Cardiac septum (tissue), 1 donor: ENCODE measurements at regions of chr1 and their contacts with region 1.

Region 1: GRCh38 chr1:41101950-41102607 is 80.6 kb upstream of the SLFNL1 start:
- DNase-seq: peak; percentile 91

Region 2: GRCh38 chr1:40979233-40980067 is 122.6 kb before region 1 on chr1 and contains the start of gene CTPS1:
- intact Hi-C with region 1: loop called (anchors 5 kb)
- DNase-seq: peak; percentile 98
- total RNA-seq, gene CTPS1: 8.5 TPM

Region 3: DNA sequence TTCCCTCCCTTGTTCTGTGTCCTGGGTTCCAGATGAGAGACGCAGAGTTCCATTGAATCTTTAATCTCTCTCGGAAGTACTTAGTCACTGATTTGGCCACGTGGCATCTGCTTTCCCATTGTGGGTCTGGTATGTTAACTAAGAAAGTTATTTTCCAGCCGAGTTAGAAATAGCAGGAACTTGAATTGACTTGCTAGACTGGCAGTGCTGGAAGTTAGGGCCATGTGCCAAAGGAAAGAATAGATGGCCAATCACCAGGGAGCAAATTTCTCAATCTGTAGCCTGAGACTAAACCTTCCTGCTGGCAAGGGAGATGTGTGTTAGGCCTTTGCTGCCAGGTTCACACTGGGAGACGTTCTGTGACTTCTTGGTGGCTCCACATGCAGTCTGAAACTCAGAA is 56.3 kb before region 1 on chr1:
- intact Hi-C with region 1: loop called (anchors 2 kb)
- DNase-seq: no peak

Region 4: DNA sequence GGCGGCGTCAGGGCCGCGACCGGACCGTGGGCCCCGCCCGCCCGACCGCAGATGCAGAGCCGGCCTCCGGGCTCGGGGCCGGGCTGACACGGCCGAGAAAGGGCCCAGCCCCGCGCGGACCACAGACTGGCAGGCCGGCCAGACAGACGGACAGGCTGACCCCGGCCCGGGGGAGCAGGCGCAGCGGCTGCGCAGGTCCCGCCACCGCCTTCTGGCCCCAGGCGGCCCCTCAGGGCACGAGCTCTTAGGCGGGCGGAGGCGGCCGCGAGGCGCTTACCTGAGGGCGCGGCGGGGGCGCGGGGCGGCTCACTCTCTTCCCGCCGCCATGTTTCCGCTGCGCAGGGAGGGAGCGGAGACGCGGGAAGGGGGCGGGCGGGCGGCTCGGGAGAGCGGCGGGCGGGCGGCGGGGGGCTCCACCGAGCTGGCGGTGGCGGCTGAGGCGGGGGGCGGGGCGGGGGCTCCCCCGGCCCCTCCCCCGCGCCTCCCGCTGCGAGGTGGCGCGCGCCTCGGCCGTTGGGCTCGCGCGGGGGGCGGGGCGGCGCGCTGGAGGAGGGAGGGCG is 139.8 kb after region 1 on chr1 and contains the start of gene SCMH1:
- intact Hi-C with region 1: loop called (anchors 5 kb)
- DNase-seq: no peak
- total RNA-seq, gene SCMH1: 47.3 TPM